ENCODE measurements at regions of chr5 and their contacts with region 1.

Region 1: DNA sequence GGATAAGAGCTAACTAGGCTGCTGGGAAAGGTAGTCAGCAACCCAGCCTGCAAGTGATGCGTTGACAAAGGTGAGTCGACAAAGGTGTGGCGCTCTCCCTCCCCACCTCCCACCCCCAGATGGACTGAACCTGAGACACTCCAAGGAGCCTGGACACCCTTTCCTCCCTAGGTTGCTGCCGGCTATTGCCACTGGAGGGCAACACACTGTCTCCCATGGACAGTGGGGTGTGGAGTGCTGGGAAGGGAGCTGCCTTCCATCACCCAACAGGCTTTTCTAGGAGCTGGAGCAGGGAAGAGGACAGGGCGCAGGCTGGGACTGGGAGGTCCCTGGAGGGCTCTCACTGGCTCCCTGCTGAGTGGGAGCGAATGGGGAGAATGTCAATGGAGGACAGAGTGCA is 75.4 kb upstream of the ARAP3 start:
- DNase-seq: peak in 1 of 5 donors; percentile 17
- ATAC-seq: peak in 3 of 4 donors; percentile 28 to 47 (median 38)
- H3K4me3 ChIP-seq: no peak overlapping the region
- H3K27ac ChIP-seq: no peak overlapping the region
- H3K4me1 ChIP-seq: peaks cover 0 to 22% (median 10%) of the 10 kb centered on the region in 12 donors
- H3K27me3 ChIP-seq: peaks cover 0 to 37% (median 16%) of the 10 kb centered on the region in 9 donors
- CTCF ChIP-seq: peak in 9 of 12 donors; percentile 6 to 50 (median 29)
- POLR2A ChIP-seq: no peak

Region 2: GRCh38 chr5:141701360-141702119 is 55.9 kb before region 1 on chr5:
- intact Hi-C with region 1: loop called in 1 of 10 experiments (anchors 5 kb)
- DNase-seq: peak in 2 of 5 donors; percentile 48 to 52
- ATAC-seq: peak in 3 of 4 donors; percentile 19 to 47 (median 20)
- H3K4me3 ChIP-seq: peak overlapping the region in 8 of 12 donors; percentile 49 to 65 (median 58)
- H3K27ac ChIP-seq: peak overlapping the region in 4 of 12 donors; percentile 3 to 50 (median 22)
- H3K4me1 ChIP-seq: peaks cover 0 to 23% (median 15%) of the 10 kb centered on the region in 12 donors
- H3K27me3 ChIP-seq: peaks cover 0 to 39% (median 17%) of the 10 kb centered on the region in 9 donors
- CTCF ChIP-seq: no peak
- POLR2A ChIP-seq: no peak

Region 3: GRCh38 chr5:142087920-142088679 is 330.7 kb after region 1 on chr5:
- intact Hi-C with region 1: no loop called
- DNase-seq: no peak
- ATAC-seq: no peak
- H3K4me3 ChIP-seq: no peak overlapping the region
- H3K27ac ChIP-seq: no peak overlapping the region
- H3K4me1 ChIP-seq: peaks cover 0 to 5% (median 0%) of the 10 kb centered on the region in 12 donors
- H3K27me3 ChIP-seq: no peaks in the 10 kb centered on the region
- CTCF ChIP-seq: no peak
- POLR2A ChIP-seq: no peak

Measured in heart left ventricle (tissue), 16 donors.